ENCODE measurements at regions of chr1 and their contacts with region 1.

Region 1: GRCh38 chr1:186155594-186155993 is 219.5 kb downstream of the TPR start:
- DNase-seq: peak in 3 of 9 donors; percentile 2 to 4 (median 2)
- ATAC-seq: peak; percentile 37
- H3K4me3 ChIP-seq: no peak overlapping the region
- H3K4me3 Mint-ChIP-seq: no peak overlapping the region
- H3K27ac ChIP-seq: no peak overlapping the region
- H3K27ac Mint-ChIP-seq: no peak overlapping the region
- H3K4me1 ChIP-seq: no peaks in the 10 kb centered on the region
- H3K4me1 Mint-ChIP-seq: no peaks in the 10 kb centered on the region
- H3K27me3 ChIP-seq: no peaks in the 10 kb centered on the region
- H3K27me3 Mint-ChIP-seq: peaks cover 4 to 13% (median 8%) of the 10 kb centered on the region in 5 donors

Region 2: DNA sequence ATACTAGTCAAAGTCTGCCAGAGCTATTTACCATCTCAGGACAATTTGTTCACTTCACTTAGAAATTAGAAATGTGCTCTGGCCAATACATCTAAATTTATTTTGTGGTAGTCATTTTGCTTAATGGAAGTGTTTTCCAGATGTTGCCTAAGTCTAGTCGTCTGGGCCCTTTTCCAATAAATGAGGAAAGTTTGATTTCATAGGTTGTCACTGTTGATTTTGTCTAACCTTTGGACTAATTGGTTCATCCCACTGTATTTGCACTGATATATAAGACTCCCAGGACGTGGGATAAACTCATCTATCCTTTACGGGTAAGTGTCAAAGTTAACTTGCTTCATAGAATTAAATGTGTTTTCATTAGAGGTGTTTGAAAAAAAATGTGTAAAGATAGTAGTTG is 140.4 kb after region 1 on chr1:
- CTCF ChIA-PET with region 1: no interaction called
- POLR2A ChIA-PET with region 1: no interaction called
- intact Hi-C with region 1: loop called in 1 of 2 experiments (anchors 5 kb)
- DNase-seq: no peak
- ATAC-seq: no peak
- H3K4me3 ChIP-seq: no peak within 1 kb of the TSS
- H3K4me3 Mint-ChIP-seq: peak within 1 kb of the TSS in 5 of 10 donors; percentile 5 to 40 (median 26)
- H3K27ac ChIP-seq: no peak within 1 kb of the TSS
- H3K27ac Mint-ChIP-seq: peak within 1 kb of the TSS in 7 of 9 donors; percentile 18 to 100 (median 33)
- H3K4me1 ChIP-seq: peaks cover 0 to 8% of the 10 kb centered on the region in 2 donors
- H3K4me1 Mint-ChIP-seq: peaks cover 6 to 71% (median 56%) of the 10 kb centered on the region in 7 donors
- H3K27me3 ChIP-seq: no peaks in the 10 kb centered on the region
- H3K27me3 Mint-ChIP-seq: no peaks in the 10 kb centered on the region